Activated naive CD4-positive, alpha-beta T cell treated with anti-CD3 and anti-CD28 coated beads, Interleukin-2, amount 10 ng/mL, durations not matched to agents 7 days and 5 days (primary cell): ENCODE measurements at regions of chr16 and their contacts with region 1.

Region 1: DNA sequence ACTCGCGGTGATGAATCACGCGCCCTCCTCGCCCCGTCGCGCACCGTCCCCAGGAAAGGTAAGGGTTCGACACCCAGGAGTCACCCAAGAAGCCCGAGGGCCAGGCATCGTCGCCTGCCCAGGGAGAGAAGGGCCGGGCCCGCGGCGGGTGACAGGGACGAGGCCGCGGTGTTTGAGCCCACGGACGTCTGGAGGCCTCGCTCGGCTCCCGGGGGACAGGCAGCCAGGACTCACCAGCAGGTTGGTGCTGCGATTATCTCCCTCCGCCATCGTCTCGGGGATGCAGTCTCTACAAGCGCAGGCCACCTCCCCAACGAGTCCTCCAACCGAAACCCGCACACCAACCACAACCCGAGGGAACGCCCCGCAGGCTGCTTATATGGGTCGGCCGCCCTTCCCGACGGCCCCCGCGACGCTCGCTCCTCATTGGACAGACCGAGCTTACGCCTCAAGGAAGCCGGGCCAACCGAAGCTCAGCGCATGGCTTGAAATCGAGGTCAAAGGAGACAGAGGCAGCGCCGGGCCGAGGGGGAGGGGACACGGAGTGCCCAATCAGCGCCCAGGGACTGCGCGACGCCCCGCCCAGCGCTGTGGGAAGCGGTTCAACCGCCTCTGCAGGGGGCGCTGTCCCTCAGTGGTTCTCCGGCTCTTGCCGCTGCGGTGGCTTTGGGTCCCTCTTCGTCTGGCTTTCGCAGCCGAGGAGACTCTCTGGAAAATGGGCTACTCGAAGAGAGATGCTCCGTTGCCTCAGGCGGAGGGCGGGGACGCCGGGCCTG is at the start of gene ARL6IP1:
- DNase-seq: peak; percentile 99
- H3K4me3 Mint-ChIP-seq: peak within 1 kb of the TSS; percentile 96
- H3K27ac Mint-ChIP-seq: peak within 1 kb of the TSS; percentile 95
- H3K4me1 Mint-ChIP-seq: peaks cover 74% of the 10 kb centered on the region
- H3K27me3 Mint-ChIP-seq: peaks cover 8% of the 10 kb centered on the region

Region 2: GRCh38 chr16:18789850-18790724 is 11.3 kb before region 1 on chr16 and contains the start of gene RPS15A:
- CTCF ChIA-PET with region 1: interaction called, 10 read pairs
- DNase-seq: peak; percentile 97
- H3K4me3 Mint-ChIP-seq: peak within 1 kb of the TSS; percentile 95
- H3K27ac Mint-ChIP-seq: peak within 1 kb of the TSS; percentile 95
- H3K4me1 Mint-ChIP-seq: peaks cover 55% of the 10 kb centered on the region
- H3K27me3 Mint-ChIP-seq: no peaks in the 10 kb centered on the region

Region 3: DNA sequence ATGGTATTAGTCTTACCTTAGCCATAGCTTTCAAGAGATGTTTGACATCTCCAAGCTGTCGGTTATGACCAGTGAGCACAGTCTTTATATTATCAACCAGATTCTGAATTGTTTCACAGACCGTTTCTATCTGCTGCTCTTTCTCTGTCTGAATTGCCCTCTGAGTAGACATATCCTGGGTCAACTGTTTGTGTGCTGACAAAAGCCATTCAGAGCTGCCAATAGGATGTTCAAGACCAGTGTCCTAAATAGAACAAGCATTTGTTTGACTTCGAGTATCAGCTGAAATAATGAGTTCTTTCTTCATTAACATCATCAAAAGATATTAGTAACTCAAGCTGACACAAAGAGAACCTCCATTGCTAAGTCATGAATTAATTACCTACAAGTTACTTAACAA is 14.9 kb after region 1 on chr16:
- CTCF ChIA-PET with region 1: interaction called, 10 read pairs
- DNase-seq: no peak
- H3K4me3 Mint-ChIP-seq: no peak overlapping the region
- H3K27ac Mint-ChIP-seq: no peak overlapping the region
- H3K4me1 Mint-ChIP-seq: peaks cover 16% of the 10 kb centered on the region
- H3K27me3 Mint-ChIP-seq: no peaks in the 10 kb centered on the region

Region 4: DNA sequence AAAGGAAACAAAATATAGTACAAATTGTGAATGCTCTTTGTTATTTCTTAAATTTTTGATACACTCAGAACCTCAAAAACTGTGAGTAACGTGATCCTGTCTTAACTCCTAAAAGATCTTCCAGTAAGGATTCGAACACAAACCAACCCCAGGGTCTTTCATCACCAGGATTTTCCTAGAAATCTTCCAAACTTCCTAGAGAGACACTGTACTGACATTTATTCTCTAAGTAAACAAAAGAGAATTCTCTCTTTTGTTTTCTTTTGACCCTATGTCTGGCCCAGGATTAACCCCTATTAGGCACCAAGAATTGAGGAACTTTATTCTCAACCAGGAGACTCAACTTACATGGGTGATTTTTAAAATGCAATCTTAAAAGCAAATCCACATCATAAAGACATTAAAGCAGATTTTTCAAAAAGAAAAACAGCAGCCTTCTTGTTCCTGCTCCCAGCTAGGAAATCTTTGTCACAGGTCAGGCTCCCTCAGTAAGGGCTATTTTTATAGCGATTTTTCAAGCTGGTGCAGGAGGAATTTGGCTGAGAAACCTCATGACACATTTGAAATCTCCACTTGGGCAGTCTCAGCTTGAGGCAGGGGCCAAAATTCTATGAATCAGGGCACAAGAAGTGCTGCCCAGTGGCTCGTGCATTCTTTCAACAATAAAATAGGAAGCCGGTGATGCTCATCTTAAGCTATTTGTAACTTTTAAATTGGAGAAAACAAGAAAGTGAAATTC is 131.0 kb after region 1 on chr16:
- CTCF ChIA-PET with region 1: no interaction called
- DNase-seq: no peak
- H3K4me3 Mint-ChIP-seq: no peak overlapping the region
- H3K27ac Mint-ChIP-seq: no peak overlapping the region
- H3K4me1 Mint-ChIP-seq: peaks cover 16% of the 10 kb centered on the region
- H3K27me3 Mint-ChIP-seq: peaks cover 20% of the 10 kb centered on the region

Region 5: DNA sequence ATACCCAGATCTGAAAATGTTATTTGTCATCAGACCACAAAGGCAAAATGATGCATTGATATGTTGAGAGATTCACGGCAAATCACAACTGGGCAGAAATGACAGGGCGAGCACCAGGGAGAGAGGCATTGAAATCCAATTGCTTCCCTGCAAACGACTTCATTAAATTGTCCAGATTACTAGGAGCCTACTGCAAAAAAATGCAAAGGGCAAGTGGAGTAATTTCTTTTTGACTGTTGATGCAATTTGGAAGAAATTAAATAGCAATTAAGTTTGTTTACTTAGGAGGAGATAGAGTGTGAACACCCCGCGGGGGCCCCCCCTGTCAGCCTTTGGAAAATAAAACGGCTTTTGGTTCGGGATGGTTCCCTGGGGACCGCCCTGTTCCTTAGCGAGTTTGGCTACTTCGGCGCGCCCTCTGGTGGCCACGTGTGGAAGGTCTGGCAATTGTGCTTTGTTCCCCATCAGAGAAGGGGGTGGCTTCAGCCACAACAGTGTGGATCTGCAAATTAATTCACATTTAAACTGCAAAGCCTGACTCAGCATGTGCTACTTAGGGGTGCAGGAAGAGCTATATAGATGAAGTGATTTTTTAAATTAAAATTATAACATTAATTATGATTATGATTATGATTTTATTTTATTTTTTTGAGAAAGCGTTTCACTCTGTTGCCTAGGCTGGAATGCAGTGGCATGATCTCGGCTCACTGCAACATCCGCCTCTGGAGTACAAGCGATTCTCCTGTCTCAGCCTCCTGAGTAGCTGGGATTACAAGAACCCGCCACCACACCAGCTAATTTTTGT is 167.9 kb after region 1 on chr16:
- CTCF ChIA-PET with region 1: interaction called, 10 read pairs
- DNase-seq: peak; percentile 84
- H3K4me3 Mint-ChIP-seq: no peak overlapping the region
- H3K27ac Mint-ChIP-seq: no peak overlapping the region
- H3K4me1 Mint-ChIP-seq: peaks cover 6% of the 10 kb centered on the region
- H3K27me3 Mint-ChIP-seq: peaks cover 4% of the 10 kb centered on the region